Common myeloid progenitor, CD34-positive (primary cell): ENCODE measurements at regions of chr3 and their contacts with region 1.

Region 1: DNA sequence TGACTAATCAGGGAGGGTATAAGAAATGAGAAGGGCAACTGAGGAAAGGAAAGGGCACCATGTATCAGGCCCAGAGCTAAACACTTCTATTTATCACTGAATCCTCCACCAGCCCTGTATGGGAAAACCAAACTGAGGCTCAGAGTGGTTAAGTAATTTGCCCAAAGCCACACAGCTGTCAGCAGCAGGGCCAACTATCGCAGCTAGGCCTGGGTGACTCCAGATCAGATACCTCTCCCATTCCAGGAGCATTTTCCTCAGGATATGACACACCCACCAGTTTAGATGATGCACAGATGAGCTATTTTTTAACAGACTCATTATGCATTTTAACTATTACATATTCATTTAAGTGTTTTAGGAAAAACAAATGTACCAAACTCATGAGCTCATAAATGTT is 14.5 kb downstream of the NUP210 start:
- DNase-seq: no peak
- H3K4me3 ChIP-seq: no peak overlapping the region
- H3K27ac ChIP-seq: no peak overlapping the region
- H3K4me1 ChIP-seq: peaks cover 0 to 13% (median 11%) of the 10 kb centered on the region in 4 experiments
- H3K27me3 ChIP-seq: no peaks in the 10 kb centered on the region

Region 2: GRCh38 chr3:13391308-13391707 is 14.3 kb before region 1 on chr3:
- CTCF ChIA-PET with region 1: interaction called, 11 read pairs
- POLR2A ChIA-PET with region 1: no interaction called
- DNase-seq: peak in 1 of 3 donors; percentile 8
- H3K4me3 ChIP-seq: no peak overlapping the region
- H3K27ac ChIP-seq: no peak overlapping the region
- H3K4me1 ChIP-seq: no peaks in the 10 kb centered on the region
- H3K27me3 ChIP-seq: no peaks in the 10 kb centered on the region

Region 3: GRCh38 chr3:13424141-13424844 is 18.7 kb after region 1 on chr3:
- CTCF ChIA-PET with region 1: no interaction called
- POLR2A ChIA-PET with region 1: no interaction called
- DNase-seq: peak in 2 of 3 donors; percentile 24 to 47
- H3K4me3 ChIP-seq: no peak overlapping the region
- H3K27ac ChIP-seq: no peak overlapping the region
- H3K4me1 ChIP-seq: peaks cover 0 to 24% (median 18%) of the 10 kb centered on the region in 4 experiments
- H3K27me3 ChIP-seq: no peaks in the 10 kb centered on the region